ENCODE measurements at regions of chr17 and their contacts with region 1.

Region 1: GRCh38 chr17:75827252-75828115 is 16.7 kb downstream of the UNC13D start:
- DNase-seq: peak in 9 of 10 donors; percentile 47 to 92 (median 63)

Region 2: GRCh38 chr17:75712446-75712845 is 115.0 kb before region 1 on chr17:
- intact Hi-C with region 1: no loop called
- DNase-seq: no peak

Region 3: GRCh38 chr17:75784473-75785015 is 42.9 kb before region 1 on chr17 and contains the start of gene UNK:
- intact Hi-C with region 1: loop called (anchors 5 kb)
- DNase-seq: peak; percentile 97 to 99 (median 98)